PC-9 (cell line): ENCODE measurements at regions of chr13 and their contacts with region 1.

Region 1: DNA sequence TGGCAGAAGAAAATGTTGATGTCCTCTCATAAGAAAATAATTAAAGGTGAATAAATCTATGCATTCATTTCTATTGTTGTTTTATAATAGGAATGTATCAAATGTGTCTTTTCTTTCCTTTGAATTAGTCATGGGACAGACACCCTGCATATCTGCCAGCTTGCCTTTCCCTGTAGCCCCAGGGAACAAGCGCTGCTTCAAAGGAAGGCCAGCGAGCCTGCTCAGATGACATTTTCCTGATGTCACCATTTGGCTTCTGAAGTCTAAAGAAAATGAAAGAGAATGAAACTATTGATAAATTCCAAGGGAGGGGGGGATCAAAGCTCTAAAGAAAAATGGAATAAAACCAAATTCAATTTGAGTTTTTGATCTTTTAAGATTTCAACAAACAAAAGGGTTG is 574.8 kb downstream of the IRS2 start:
- DNase-seq: peak; percentile 84 to 95
- H3K4me3 ChIP-seq: no peak overlapping the region
- H3K27ac ChIP-seq: peak overlapping the region; percentile 62
- H3K4me1 ChIP-seq: peaks cover 18% of the 10 kb centered on the region
- H3K27me3 ChIP-seq: no peaks in the 10 kb centered on the region
- CTCF ChIP-seq: no peak

Region 2: DNA sequence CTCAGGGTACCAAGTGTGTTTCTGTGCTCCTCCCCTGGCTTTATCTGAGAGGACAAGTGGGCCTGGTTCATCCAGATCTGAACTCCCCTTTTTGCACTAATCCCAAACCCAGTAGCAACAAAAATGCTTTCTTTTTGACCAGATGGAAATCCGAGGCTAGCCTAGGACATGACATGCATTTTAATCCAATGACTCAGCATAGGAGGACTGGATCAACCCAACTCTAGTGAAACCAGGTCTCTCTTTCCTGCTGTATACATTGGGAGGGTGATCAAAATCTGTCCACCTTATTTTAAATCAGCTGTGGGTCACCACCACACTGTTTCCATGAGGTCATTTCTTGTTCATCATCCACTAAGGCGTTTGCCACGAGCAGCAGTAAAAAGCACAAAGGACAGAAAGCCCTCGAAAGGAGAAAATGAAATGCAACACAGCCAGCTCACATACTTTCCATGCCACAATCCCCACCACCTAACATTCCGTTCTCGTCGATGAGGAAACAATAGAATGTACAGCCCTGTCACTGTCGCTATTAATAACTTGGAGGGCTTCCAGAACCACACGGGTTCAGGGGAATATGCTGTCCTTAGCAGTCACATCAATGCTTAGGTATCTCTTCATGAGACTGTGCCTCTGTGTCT is 31.8 kb after region 1 on chr13:
- CTCF ChIA-PET with region 1: no interaction called
- POLR2A ChIA-PET with region 1: interaction called, 4 read pairs
- intact Hi-C with region 1: loop called (anchors 1 kb)
- DNase-seq: peak; percentile 75 to 96
- H3K4me3 ChIP-seq: peak overlapping the region; percentile 22; the same call in 1 of the 2 replicates
- H3K27ac ChIP-seq: peak overlapping the region; percentile 92
- H3K4me1 ChIP-seq: peaks cover 39% of the 10 kb centered on the region
- H3K27me3 ChIP-seq: no peaks in the 10 kb centered on the region
- CTCF ChIP-seq: no peak

Region 3: GRCh38 chr13:109256866-109257760 is 45.5 kb after region 1 on chr13:
- CTCF ChIA-PET with region 1: no interaction called
- POLR2A ChIA-PET with region 1: no interaction called
- intact Hi-C with region 1: loop called (anchors 2 kb)
- DNase-seq: peak; percentile 63 to 100
- H3K4me3 ChIP-seq: peak overlapping the region; percentile 10; the same call in 1 of the 2 replicates
- H3K27ac ChIP-seq: peak overlapping the region; percentile 97
- H3K4me1 ChIP-seq: peaks cover 57% of the 10 kb centered on the region
- H3K27me3 ChIP-seq: no peaks in the 10 kb centered on the region
- CTCF ChIP-seq: no peak

Region 4: DNA sequence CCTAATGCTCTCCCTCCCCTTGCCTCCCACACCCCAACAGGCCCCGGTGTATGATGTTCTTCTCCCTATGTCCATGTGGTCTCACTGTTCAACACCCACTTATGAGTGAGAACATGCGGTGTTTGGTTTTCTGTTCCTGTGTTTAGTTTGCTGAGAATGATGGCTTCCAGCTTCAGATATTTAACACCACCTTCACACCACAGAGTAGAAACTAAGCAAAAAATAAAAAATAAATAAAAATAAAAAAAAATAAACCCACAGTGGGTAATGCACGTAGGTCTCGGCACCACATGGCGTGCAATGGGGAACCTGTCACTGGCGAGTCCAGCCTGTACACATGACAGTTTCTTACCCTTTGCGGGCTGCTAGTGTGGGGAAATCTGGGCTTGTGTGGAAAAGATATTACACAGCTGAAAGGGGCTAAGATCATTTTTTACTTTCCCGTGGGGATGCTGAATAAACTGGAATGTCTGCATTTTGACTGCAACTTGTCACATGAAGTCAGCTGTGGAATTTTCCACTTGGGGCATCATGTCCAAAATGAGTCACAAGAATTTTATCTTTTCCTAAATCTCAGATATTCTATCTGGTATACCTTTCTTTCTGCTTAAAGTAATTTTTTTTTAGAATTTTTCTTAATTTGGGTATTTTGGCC is 404.2 kb after region 1 on chr13:
- CTCF ChIA-PET with region 1: interaction called, 10 read pairs
- POLR2A ChIA-PET with region 1: no interaction called
- intact Hi-C with region 1: no loop called
- DNase-seq: peak in 1 of 2 experiments; percentile 73
- H3K4me3 ChIP-seq: no peak overlapping the region
- H3K27ac ChIP-seq: no peak overlapping the region
- H3K4me1 ChIP-seq: peaks cover 25% of the 10 kb centered on the region
- H3K27me3 ChIP-seq: no peaks in the 10 kb centered on the region
- CTCF ChIP-seq: no peak